HepG2 (cell line): ENCODE measurements at regions of chr12 and their contacts with region 1.

Region 1: GRCh38 chr12:11202811-11203210 is 16.1 kb upstream of the TAS2R42 start:
- DNase-seq: no peak
- ATAC-seq: no peak
- H3K4me3 ChIP-seq: no peak overlapping the region
- H3K27ac ChIP-seq: no peak overlapping the region
- H3K4me1 ChIP-seq: 0 out of 2 replicates have a peak, but pooled peaks cover 5% of the 10 kb centered on the region
- H3K27me3 ChIP-seq: no peaks in the 10 kb centered on the region
- CTCF ChIP-seq: no peak
- EP300 ChIP-seq: no peak
- POLR2A ChIP-seq: no peak
- RAD21 ChIP-seq: no peak

Region 2: GRCh38 chr12:10771132-10771733 is 431.6 kb before region 1 on chr12:
- CTCF ChIA-PET with region 1: interaction called, 28 read pairs
- POLR2A ChIA-PET with region 1: no interaction called
- in situ Hi-C with region 1: loop called (anchors 5 kb)
- intact Hi-C with region 1: loop called (anchors 1 kb)
- DNase-seq: peak; percentile 24
- ATAC-seq: no peak
- H3K4me3 ChIP-seq: no peak overlapping the region
- H3K27ac ChIP-seq: no peak overlapping the region
- H3K4me1 ChIP-seq: no peaks in the 10 kb centered on the region
- H3K27me3 ChIP-seq: peaks cover 0 to 6% of the 10 kb centered on the region in 2 experiments; a peak in 2 of 5 replicates
- CTCF ChIP-seq: peak; percentile 66
- EP300 ChIP-seq: no peak
- POLR2A ChIP-seq: no peak
- RAD21 ChIP-seq: peak; percentile 46; the same call in 1 of the 2 replicates

Region 3: DNA sequence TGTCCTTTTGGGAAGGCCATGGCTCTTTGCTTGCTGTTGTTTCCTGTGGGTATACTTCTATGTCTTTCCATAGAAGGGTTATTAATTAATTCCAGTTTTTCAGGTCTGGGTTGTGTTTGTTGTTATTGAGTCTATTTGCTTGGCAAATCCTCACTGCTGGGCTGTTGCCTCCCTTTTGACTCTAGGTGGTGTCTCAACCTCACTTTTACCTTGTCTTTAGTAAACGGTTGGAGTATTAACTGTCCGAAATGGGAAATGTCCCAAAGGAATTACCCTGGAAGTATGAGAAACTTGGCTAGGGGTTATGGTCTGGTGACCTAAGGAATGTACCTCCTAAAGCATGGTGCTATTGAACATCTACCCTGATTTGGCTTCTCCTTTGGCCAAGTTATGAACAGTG is 335.4 kb before region 1 on chr12:
- CTCF ChIA-PET with region 1: interaction called, 5 read pairs
- POLR2A ChIA-PET with region 1: no interaction called
- in situ Hi-C with region 1: no loop called
- intact Hi-C with region 1: loop called (anchors 1 kb)
- DNase-seq: peak; percentile 23
- ATAC-seq: peak; percentile 76
- H3K4me3 ChIP-seq: no peak overlapping the region
- H3K27ac ChIP-seq: no peak overlapping the region
- H3K4me1 ChIP-seq: peaks cover 14% of the 10 kb centered on the region; the same call in 1 of the 2 replicates
- H3K27me3 ChIP-seq: no peaks in the 10 kb centered on the region; a peak in 1 of 5 replicates
- CTCF ChIP-seq: peak; percentile 55
- EP300 ChIP-seq: no peak
- POLR2A ChIP-seq: no peak
- RAD21 ChIP-seq: no peak; the same call in 1 of the 2 replicates